Dorsolateral prefrontal cortex (tissue), 120 donors: ENCODE measurements at regions of chr4 and their contacts with region 1.

Region 1: DNA sequence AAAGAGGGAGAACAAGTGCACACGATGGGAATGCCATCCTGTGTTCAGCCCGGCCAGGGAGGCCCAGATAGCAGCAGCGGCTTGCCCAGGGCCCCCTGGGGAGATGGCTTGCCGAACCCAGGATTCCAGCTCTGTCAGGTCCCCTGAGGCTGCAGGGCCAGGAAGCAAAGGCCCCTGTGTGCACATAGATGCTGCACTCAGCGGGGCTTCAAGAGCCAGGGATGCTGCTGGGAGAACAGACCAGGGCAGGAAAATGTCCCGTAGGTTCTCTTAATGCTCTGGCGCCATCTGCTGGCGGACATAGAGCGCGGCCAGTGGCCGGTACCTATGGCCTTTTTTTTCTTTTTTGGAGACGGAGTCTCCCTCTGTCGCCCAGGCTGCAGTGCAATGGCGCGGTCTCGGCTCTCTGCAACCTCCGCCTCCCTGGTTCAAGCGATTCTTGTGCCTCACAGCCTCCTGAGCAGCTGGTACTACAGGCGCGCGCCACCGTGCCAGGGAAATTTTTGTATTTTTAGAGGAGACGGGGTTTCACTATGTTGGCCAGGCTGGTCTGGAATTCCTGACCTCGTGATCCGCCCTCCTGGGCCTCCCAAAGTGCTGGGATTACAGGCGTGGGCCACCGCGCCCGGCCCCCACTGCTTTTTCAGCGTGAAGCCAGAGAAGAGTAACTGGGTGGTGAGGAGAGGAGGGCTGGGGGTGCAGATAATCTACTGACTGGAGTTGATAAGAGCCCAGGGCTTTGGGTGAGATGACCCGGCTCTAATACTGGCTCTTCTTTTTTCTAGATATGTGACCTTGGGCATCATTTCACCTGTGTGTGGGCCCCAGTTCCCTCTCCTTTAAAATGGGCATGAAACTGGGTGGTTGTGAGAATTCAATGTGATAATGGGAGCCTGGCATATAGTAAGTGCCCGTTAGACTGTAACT is 22.5 kb downstream of the MED28 start:
- DNase-seq: peak; percentile 74 to 86 (median 84)
- H3K4me3 ChIP-seq: peak overlapping the region in 34 of 59 donors; percentile 1 to 49 (median 31)
- H3K27ac ChIP-seq: peak overlapping the region in 57 of 59 donors; percentile 3 to 91 (median 77)
- H3K27me3 ChIP-seq: no peaks in the 10 kb centered on the region
- CTCF ChIP-seq: peak; percentile 78 to 98 (median 95)

Region 2: DNA sequence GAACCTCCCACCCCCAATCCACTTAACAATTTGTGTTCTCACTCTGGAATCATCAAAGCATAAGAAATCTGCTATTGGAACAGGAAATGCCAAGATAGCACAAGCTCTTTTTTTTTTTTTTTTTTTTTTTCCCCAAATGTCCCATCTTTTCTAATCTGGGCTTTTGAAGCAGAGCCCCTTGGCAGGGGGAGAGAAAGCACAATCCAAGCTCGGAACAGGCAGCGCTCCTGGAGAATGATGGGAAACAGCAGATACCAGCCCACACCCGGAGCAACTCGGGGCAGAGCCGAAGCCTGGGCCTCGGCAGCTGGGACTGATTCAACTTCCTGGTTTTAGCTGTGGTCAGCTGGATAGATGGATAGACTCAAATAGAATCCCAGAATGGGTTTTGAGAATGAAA is 360.2 kb before region 1 on chr4:
- intact Hi-C with region 1: no loop called
- DNase-seq: peak in 7 of 10 donors; percentile 5 to 66 (median 57)
- H3K4me3 ChIP-seq: no peak overlapping the region
- H3K27ac ChIP-seq: peak overlapping the region in 52 of 59 donors; percentile 4 to 85 (median 62)
- H3K27me3 ChIP-seq: no peaks in the 10 kb centered on the region
- CTCF ChIP-seq: no peak

Region 3: DNA sequence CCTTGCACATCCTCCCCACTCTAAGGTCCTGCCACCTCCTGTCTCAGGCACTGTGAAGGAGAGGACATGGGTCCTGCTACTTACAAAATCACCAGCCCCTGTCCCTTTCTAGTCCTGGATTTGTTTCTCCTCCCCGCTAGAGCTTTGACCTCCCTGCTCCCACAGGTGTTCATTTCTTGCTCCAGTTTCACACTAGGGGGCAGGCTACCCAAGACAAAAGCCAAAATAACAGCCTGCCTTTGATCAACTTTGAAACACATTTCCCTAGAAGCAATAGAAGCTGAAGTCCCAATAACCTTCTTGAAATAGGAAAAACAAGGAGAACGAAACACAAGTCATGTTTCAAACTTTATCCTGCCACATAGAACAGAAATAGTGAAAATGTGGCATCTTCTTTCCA is 289.5 kb before region 1 on chr4:
- intact Hi-C with region 1: loop called in 1 of 2 experiments (anchors 10 kb)
- DNase-seq: no peak
- H3K4me3 ChIP-seq: no peak overlapping the region
- H3K27ac ChIP-seq: no peak overlapping the region
- H3K27me3 ChIP-seq: no peaks in the 10 kb centered on the region
- CTCF ChIP-seq: peak in 55 of 56 donors; percentile 19 to 72 (median 56)

Region 4: GRCh38 chr4:17469931-17470649 is 166.9 kb before region 1 on chr4:
- intact Hi-C with region 1: loop called in 1 of 2 experiments (anchors 5 kb)
- DNase-seq: no peak
- H3K4me3 ChIP-seq: no peak overlapping the region
- H3K27ac ChIP-seq: peak overlapping the region in 20 of 59 donors; percentile 11 to 66 (median 33)
- H3K27me3 ChIP-seq: no peaks in the 10 kb centered on the region
- CTCF ChIP-seq: no peak

Region 5: DNA sequence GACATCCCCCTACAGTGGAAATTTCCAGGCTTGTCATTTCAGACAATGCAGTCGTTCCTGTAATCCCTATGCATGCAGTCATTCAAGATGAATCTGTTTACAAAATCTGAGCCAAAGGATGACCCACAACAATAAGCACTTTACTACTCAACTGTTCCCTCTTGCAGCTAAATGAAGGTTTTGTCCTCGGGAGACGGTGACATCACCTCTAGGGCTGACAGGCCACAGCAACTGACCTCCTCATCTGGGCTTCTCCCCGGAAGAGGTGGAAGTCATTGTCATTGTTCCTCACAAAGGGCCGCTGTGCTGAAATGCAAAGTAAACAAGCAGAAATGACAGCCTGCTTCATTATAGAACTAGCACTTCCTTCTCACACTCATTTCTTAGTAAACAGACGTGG is 92.8 kb before region 1 on chr4:
- intact Hi-C with region 1: loop called in 1 of 2 experiments (anchors 1 kb)
- DNase-seq: peak; percentile 23 to 94 (median 87)
- H3K4me3 ChIP-seq: peak overlapping the region in 2 of 59 donors; percentile 18 to 21
- H3K27ac ChIP-seq: peak overlapping the region; percentile 66 to 100 (median 95)
- H3K27me3 ChIP-seq: no peaks in the 10 kb centered on the region
- CTCF ChIP-seq: peak in 4 of 56 donors; percentile 6 to 23 (median 20)

Region 6: GRCh38 chr4:17552427-17552826 is 84.5 kb before region 1 on chr4:
- intact Hi-C with region 1: loop called (anchors 1 to 2 kb)
- DNase-seq: no peak
- H3K4me3 ChIP-seq: no peak overlapping the region
- H3K27ac ChIP-seq: peak overlapping the region in 19 of 59 donors; percentile 6 to 98 (median 47)
- H3K27me3 ChIP-seq: no peaks in the 10 kb centered on the region
- CTCF ChIP-seq: no peak

Region 7: DNA sequence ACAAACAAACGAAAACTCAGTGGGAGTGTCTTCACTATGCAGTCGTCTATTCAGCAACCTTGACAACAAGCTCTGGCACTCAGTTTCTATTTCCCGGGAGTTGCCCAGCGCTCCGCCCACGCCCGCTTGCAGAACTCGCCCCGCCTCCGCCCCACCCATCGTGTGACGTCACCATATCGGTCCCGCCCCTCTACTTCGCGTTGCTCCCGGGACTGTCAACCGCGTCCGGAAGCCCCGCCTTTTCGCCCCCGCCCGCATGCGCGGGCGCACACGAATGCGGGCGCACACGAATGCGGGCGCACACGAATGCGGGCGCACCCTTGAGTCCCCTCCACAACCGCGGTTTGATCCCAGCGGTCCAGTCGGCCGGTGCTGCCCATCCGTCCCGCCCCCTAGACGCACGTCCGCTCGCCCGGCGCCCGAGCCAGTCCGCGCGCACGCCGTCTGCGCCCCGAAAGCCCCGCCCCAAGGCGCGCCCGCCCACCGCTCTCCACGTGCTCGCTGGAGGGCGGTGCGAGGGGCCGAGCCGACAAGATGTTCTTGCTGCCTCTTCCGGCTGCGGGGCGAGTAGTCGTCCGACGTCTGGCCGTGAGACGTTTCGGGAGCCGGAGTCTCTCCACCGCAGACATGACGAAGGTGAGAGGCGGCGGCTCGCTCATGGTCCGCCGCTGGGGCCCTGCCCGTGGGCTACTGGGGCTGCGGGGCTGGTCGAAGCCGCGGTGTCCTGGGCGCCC is 59.9 kb before region 1 on chr4 and contains the start of gene LAP3:
- intact Hi-C with region 1: loop called in 1 of 2 experiments (anchors 2 kb)
- DNase-seq: peak; percentile 98 to 99 (median 99)
- H3K4me3 ChIP-seq: peak within 1 kb of the TSS; percentile 63 to 100 (median 91)
- H3K27ac ChIP-seq: peak within 1 kb of the TSS; percentile 17 to 98 (median 92)
- H3K27me3 ChIP-seq: no peaks in the 10 kb centered on the region
- CTCF ChIP-seq: peak in 20 of 56 donors; percentile 4 to 55 (median 20)
- total RNA-seq, gene LAP3: 29.7 to 116 (median 52.0) TPM

Region 8: GRCh38 chr4:17810260-17811077 is 173.5 kb after region 1 on chr4 and contains the starts of genes DCAF16 and NCAPG:
- intact Hi-C with region 1: loop called in 1 of 2 experiments (anchors 10 kb)
- DNase-seq: peak; percentile 99 to 100 (median 100)
- H3K4me3 ChIP-seq: peak within 1 kb of the TSS; percentile 56 to 98 (median 90)
- H3K27ac ChIP-seq: peak within 1 kb of the TSS; percentile 23 to 96 (median 90)
- H3K27me3 ChIP-seq: no peaks in the 10 kb centered on the region
- CTCF ChIP-seq: peak in 33 of 56 donors; percentile 2 to 62 (median 32)
- total RNA-seq, gene DCAF16: 24.8 to 77.9 (median 45.8) TPM
- total RNA-seq, gene NCAPG: 0.12 to 1.8 (median 0.44) TPM in 73 of 120 experiments, not detected in the others